ENCODE measurements at regions of chr10 and their contacts with region 1.

Region 1: DNA sequence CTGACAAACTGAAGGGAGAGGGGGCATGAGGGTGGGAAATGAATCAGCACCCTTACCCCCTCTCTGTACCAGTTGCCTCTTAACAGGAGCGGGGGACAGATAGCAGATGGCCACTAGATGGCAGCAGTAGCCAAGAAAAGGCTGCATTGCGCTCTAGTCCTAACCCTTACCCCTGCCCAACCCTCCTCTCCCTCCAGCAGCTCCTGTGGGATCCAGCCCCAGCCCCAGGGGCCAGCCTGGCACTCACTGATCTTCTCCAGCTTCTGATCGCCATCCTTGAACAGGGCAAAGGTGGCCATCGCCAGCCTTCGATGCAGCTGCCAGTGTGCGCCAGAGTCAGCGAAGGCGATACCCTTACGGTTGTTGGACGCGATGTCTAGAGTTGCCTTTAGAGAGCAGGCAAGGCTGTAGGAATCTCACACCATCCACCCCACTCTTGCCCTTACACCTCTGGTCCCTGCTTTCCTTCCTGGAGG is 2.2 kb downstream of the CYP17A1 start:
- DNase-seq: peak; percentile 62
- ATAC-seq: peak; percentile 93
- H3K4me3 ChIP-seq: no peak overlapping the region
- H3K27ac ChIP-seq: no peak overlapping the region
- H3K4me1 ChIP-seq: peaks cover 31% of the 10 kb centered on the region
- H3K27me3 ChIP-seq: no peaks in the 10 kb centered on the region; a peak in 2 of 5 replicates
- CTCF ChIP-seq: peak; percentile 98
- EP300 ChIP-seq: no peak
- POLR2A ChIP-seq: no peak
- RAD21 ChIP-seq: peak; percentile 96

Region 2: GRCh38 chr10:102583435-102584417 is 251.3 kb before region 1 on chr10:
- CTCF ChIA-PET with region 1: no interaction called
- POLR2A ChIA-PET with region 1: no interaction called
- in situ Hi-C with region 1: no loop called
- intact Hi-C with region 1: no loop called
- DNase-seq: peak; percentile 75
- ATAC-seq: peak; percentile 98
- H3K4me3 ChIP-seq: no peak overlapping the region
- H3K27ac ChIP-seq: no peak overlapping the region
- H3K4me1 ChIP-seq: peaks cover 6% of the 10 kb centered on the region
- H3K27me3 ChIP-seq: no peaks in the 10 kb centered on the region
- CTCF ChIP-seq: peak; percentile 93
- EP300 ChIP-seq: no peak
- POLR2A ChIP-seq: no peak
- RAD21 ChIP-seq: peak; percentile 84

Region 3: GRCh38 chr10:102729029-102730026 is 105.7 kb before region 1 on chr10:
- CTCF ChIA-PET with region 1: interaction called, 5 read pairs
- POLR2A ChIA-PET with region 1: no interaction called
- in situ Hi-C with region 1: no loop called
- intact Hi-C with region 1: loop called (anchors 2 kb)
- DNase-seq: peak; percentile 56
- ATAC-seq: peak; percentile 98
- H3K4me3 ChIP-seq: no peak overlapping the region
- H3K27ac ChIP-seq: no peak overlapping the region
- H3K4me1 ChIP-seq: no peaks in the 10 kb centered on the region
- H3K27me3 ChIP-seq: no peaks in the 10 kb centered on the region
- CTCF ChIP-seq: peak; percentile 97
- EP300 ChIP-seq: no peak
- POLR2A ChIP-seq: no peak
- RAD21 ChIP-seq: peak; percentile 94

Region 4: DNA sequence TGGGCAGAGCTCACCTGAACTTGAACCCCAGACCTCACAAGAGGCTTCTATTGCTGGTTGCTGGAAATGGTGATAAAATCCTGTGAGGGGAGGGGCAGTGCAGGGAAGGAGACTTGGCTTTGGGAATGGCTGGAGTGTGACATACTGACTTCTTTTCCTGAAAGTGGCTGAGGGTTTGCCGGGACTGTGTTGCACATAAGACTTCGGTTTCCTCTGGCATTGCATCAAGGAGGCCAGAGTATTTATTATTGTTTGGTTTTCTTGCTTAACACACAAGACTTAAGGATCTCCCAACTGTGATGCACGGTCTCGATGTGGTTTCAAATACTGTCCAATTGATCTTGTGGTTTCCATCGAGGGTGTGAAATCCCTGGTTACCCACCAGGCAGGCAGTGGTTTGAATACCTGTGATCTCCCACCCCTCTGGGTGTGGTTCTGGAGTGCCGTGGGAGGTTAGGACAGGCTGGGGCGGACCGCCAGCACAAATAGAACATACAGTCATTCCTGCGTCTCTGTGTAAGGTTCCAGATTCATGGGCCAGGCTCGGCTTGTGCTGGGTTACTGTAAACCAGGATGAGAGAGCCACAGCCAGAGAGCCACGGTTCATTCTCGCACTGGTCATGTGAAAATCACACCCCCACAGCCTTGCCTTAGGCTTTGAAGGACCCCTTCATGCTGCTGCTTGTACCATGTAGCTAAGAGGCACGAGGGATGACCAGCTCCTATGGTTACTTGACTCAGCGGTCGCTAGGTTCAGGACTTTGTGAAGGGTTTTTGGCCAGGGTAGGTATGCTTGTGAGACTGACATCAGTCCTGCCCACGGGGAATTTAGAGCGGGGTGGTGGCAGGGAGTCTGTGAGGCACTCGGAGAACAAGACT is 52.1 kb before region 1 on chr10:
- CTCF ChIA-PET with region 1: no interaction called
- POLR2A ChIA-PET with region 1: no interaction called
- in situ Hi-C with region 1: no loop called
- intact Hi-C with region 1: no loop called
- DNase-seq: no peak
- ATAC-seq: no peak
- H3K4me3 ChIP-seq: no peak overlapping the region
- H3K27ac ChIP-seq: no peak overlapping the region
- H3K4me1 ChIP-seq: peaks cover 25% of the 10 kb centered on the region
- H3K27me3 ChIP-seq: no peaks in the 10 kb centered on the region
- CTCF ChIP-seq: no peak
- EP300 ChIP-seq: no peak
- POLR2A ChIP-seq: no peak
- RAD21 ChIP-seq: no peak

Region 5: DNA sequence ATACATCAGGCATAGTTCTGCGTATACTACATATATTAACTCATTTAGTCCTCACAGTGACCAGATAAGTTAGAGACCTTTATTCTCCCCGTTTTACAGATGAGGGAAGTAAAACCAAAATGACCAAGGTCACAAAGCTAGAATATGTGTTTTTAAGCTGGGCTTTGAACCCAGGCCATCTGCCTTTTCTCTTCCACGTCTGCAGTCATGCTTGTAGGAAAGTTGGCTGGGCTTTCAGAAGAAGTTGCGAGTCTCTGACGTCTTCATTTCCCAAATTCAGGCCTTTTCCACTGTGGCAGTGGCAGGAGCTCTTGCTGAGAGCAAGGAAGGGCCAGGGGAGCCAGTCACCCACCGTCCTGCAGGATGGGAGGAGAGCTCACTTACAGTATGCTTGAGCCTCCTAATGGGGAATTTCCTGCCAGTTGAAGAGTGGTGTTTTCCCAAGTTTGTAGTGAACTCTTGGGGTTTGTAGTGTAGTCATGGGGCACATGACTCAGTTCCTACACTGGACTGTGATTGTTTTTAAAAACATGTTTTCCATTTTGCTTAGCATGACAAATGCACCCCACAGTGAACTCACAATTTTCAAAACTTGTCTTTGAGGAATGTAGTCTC is 32.0 kb before region 1 on chr10:
- CTCF ChIA-PET with region 1: no interaction called
- POLR2A ChIA-PET with region 1: no interaction called
- in situ Hi-C with region 1: no loop called
- intact Hi-C with region 1: no loop called
- DNase-seq: no peak
- ATAC-seq: no peak; the same call in 2 of the 3 replicates
- H3K4me3 ChIP-seq: no peak overlapping the region
- H3K27ac ChIP-seq: peak overlapping the region; percentile 10
- H3K4me1 ChIP-seq: peaks cover 26% of the 10 kb centered on the region
- H3K27me3 ChIP-seq: no peaks in the 10 kb centered on the region
- CTCF ChIP-seq: no peak
- EP300 ChIP-seq: no peak
- POLR2A ChIP-seq: no peak
- RAD21 ChIP-seq: no peak

Region 6: GRCh38 chr10:102904346-102904745 is 69.3 kb after region 1 on chr10:
- CTCF ChIA-PET with region 1: interaction called, 40 read pairs
- POLR2A ChIA-PET with region 1: interaction called, 3 read pairs
- in situ Hi-C with region 1: no loop called
- intact Hi-C with region 1: loop called (anchors 1 kb)
- DNase-seq: no peak
- ATAC-seq: no peak
- H3K4me3 ChIP-seq: no peak overlapping the region
- H3K27ac ChIP-seq: no peak overlapping the region
- H3K4me1 ChIP-seq: peaks cover 9% of the 10 kb centered on the region
- H3K27me3 ChIP-seq: no peaks in the 10 kb centered on the region
- CTCF ChIP-seq: no peak
- EP300 ChIP-seq: no peak
- POLR2A ChIP-seq: no peak
- RAD21 ChIP-seq: no peak

Region 7: GRCh38 chr10:102917962-102918816 is 83.1 kb after region 1 on chr10 and contains the start of gene CNNM2:
- CTCF ChIA-PET with region 1: interaction called, 6 read pairs
- POLR2A ChIA-PET with region 1: interaction called, 4 read pairs
- in situ Hi-C with region 1: loop called (anchors 5 kb)
- intact Hi-C with region 1: loop called (anchors 1 kb)
- DNase-seq: peak; percentile 99
- ATAC-seq: peak; percentile 85
- H3K4me3 ChIP-seq: peak within 1 kb of the TSS; percentile 97 to 99 (median 99)
- H3K27ac ChIP-seq: peak within 1 kb of the TSS; percentile 88
- H3K4me1 ChIP-seq: peaks cover 38% of the 10 kb centered on the region
- H3K27me3 ChIP-seq: no peaks in the 10 kb centered on the region; a peak in 1 of 5 replicates
- CTCF ChIP-seq: peak; percentile 34; the same call in 1 of the 2 replicates
- EP300 ChIP-seq: no peak
- POLR2A ChIP-seq: peak; percentile 62 to 70; a peak in 3 of 4 replicates
- RAD21 ChIP-seq: peak; percentile 41
- total RNA-seq, gene CNNM2: 3.4 and 9.0 TPM in 2 replicates

Region 8: DNA sequence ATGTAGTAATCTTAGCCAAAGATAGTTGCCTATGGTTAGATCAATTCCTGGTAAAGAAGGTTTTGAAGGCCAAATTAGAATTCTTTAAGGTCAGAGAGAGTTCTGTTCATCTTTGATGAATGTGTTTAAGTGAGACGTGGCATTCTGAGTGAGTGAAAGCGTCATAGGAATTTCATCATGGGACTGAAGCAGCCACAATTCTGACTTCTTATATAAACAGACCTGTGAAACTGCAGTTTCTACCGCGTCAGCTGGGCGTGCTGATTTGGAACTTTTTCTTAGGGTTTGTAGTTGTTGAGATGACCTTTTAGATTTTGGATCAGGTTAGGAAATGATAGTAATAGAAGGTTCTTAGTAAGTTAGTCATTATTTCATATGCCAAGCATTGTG is 186.8 kb after region 1 on chr10:
- CTCF ChIA-PET with region 1: no interaction called
- POLR2A ChIA-PET with region 1: no interaction called
- in situ Hi-C with region 1: no loop called
- intact Hi-C with region 1: no loop called
- DNase-seq: peak; percentile 29
- ATAC-seq: no peak
- H3K4me3 ChIP-seq: no peak overlapping the region
- H3K27ac ChIP-seq: peak overlapping the region; percentile 60
- H3K4me1 ChIP-seq: peaks cover 49% of the 10 kb centered on the region
- H3K27me3 ChIP-seq: no peaks in the 10 kb centered on the region
- CTCF ChIP-seq: no peak
- EP300 ChIP-seq: no peak
- POLR2A ChIP-seq: no peak
- RAD21 ChIP-seq: no peak

Region 9: GRCh38 chr10:103069453-103070331 is 234.6 kb after region 1 on chr10:
- CTCF ChIA-PET with region 1: interaction called, 18 read pairs
- POLR2A ChIA-PET with region 1: no interaction called
- in situ Hi-C with region 1: loop called (anchors 5 kb)
- intact Hi-C with region 1: loop called (anchors 1 kb)
- DNase-seq: peak; percentile 41
- ATAC-seq: peak; percentile 81
- H3K4me3 ChIP-seq: no peak overlapping the region
- H3K27ac ChIP-seq: no peak overlapping the region
- H3K4me1 ChIP-seq: no peaks in the 10 kb centered on the region
- H3K27me3 ChIP-seq: no peaks in the 10 kb centered on the region
- CTCF ChIP-seq: peak; percentile 83
- EP300 ChIP-seq: no peak
- POLR2A ChIP-seq: no peak
- RAD21 ChIP-seq: peak; percentile 94

Measured in HepG2 (cell line).